PC-3 (cell line): ENCODE measurements at regions of chr1 and their contacts with region 1.

Region 1: DNA sequence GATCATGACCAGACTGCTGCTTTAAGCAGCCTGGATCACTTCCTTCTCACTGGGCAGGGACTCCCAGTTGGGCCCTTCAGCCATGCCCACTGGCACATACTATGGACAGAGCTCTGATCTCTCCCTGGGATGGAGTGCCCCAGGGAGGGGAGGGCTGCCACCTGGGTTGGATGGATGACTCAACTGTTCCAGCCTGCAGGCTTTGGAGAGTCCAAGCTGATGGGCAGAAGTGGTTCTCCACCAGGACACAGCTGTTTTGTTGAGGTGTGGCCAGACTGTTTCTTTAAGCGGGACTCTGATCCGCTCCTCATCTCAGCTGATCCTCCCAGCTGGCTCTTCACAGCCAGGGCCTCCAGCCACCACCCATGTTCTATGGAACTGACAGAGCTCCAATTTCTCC is 166.9 kb downstream of the MAGI3 start:
- DNase-seq: no peak
- ATAC-seq: no peak
- H3K4me3 ChIP-seq: no peak overlapping the region
- H3K27ac ChIP-seq: no peak overlapping the region
- H3K4me1 ChIP-seq: peaks cover 7% of the 10 kb centered on the region
- H3K27me3 ChIP-seq: no peaks in the 10 kb centered on the region
- CTCF ChIP-seq: no peak

Region 2: DNA sequence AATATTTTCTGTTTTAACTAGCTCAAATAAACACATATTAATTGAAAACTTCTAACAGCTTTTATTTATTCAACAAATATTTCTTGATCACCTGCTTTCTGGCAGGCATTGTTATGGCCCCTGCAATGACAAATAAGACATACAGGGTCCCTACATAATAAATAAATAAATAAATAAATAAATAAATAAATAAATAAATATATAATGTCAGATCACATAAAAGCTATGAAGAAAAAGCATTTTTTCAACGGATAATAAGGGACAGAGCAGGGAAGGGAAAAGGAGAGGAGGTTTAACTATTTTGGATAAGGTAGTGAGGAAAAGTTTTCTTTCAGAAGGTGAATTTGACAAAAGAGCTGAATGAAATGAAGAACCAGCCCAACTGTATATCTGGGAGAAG is 51.8 kb before region 1 on chr1:
- CTCF ChIA-PET with region 1: no interaction called
- POLR2A ChIA-PET with region 1: no interaction called
- intact Hi-C with region 1: no loop called
- DNase-seq: no peak
- ATAC-seq: no peak
- H3K4me3 ChIP-seq: no peak overlapping the region
- H3K27ac ChIP-seq: no peak overlapping the region
- H3K4me1 ChIP-seq: no peaks in the 10 kb centered on the region
- H3K27me3 ChIP-seq: no peaks in the 10 kb centered on the region
- CTCF ChIP-seq: no peak

Region 3: GRCh38 chr1:113515466-113515865 is 41.7 kb before region 1 on chr1:
- CTCF ChIA-PET with region 1: no interaction called
- POLR2A ChIA-PET with region 1: no interaction called
- intact Hi-C with region 1: loop called (anchors 1 kb)
- DNase-seq: peak; percentile 80
- ATAC-seq: peak; percentile 69
- H3K4me3 ChIP-seq: 0 out of 2 replicates have a peak overlapping the region, but pooled peaks have one; percentile 17
- H3K27ac ChIP-seq: 0 out of 2 replicates have a peak overlapping the region, but pooled peaks have one; percentile 5
- H3K4me1 ChIP-seq: peaks cover 26% of the 10 kb centered on the region
- H3K27me3 ChIP-seq: no peaks in the 10 kb centered on the region
- CTCF ChIP-seq: no peak

Region 4: DNA sequence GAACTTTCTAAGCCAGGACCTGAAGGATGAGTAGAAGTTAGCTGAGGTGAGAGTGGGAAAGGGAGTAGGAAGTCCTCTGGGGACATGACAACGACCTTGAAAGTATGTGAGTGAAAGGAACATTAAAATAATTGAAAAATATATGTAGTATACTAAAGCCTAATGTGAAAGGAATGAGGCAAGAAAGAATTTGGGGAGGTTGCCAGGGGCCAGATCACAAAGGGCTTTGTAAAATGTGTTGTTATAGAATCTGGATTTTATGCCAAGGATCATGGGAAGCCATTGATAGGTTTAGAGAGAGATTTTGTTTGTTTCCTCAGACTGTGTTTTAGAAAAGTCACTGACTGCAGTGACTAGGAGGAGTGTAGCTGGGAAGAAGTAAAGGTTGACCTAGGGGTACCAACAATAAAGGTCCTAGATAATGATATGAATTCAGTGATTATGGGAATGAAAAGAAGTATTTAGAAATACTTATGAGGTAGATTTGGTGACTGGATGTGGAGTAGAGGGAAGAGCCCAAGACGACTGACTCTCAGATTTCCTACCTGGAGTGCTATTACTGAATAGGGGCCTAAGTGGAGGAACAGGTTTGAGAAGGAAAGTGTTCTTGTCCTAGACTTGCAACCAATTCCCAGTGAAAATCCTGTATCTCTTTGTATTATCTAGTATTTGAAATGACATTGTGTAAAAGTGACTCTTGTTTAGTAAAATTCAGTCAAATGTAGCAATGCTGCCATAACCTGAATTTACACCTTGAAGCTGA is 22.3 kb after region 1 on chr1:
- CTCF ChIA-PET with region 1: no interaction called
- POLR2A ChIA-PET with region 1: no interaction called
- intact Hi-C with region 1: no loop called
- DNase-seq: peak; percentile 19
- ATAC-seq: no peak
- H3K4me3 ChIP-seq: no peak overlapping the region
- H3K27ac ChIP-seq: no peak overlapping the region
- H3K4me1 ChIP-seq: no peaks in the 10 kb centered on the region
- H3K27me3 ChIP-seq: no peaks in the 10 kb centered on the region
- CTCF ChIP-seq: no peak

Region 5: DNA sequence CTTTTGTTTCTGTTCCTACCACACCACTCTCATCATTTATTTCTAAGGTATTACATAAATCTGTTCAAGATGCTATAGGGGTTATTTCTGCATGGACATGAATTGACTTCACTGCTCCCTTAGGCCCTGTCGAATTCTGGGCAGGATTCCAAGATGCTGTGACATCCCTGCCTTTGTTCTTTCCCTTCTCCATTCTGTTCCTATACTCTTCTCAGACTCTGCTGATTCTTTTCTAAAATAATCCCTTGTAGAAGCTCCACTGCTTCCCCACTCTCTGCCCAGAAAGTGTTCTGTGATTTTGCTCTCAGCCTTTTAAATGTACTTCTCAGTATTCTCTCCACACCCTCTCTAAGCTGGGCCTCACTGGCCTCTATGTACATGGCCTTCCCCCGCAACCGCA is 102.9 kb after region 1 on chr1:
- CTCF ChIA-PET with region 1: no interaction called
- POLR2A ChIA-PET with region 1: no interaction called
- intact Hi-C with region 1: loop called (anchors 5 kb)
- DNase-seq: no peak
- ATAC-seq: no peak
- H3K4me3 ChIP-seq: no peak overlapping the region
- H3K27ac ChIP-seq: no peak overlapping the region
- H3K4me1 ChIP-seq: peaks cover 42% of the 10 kb centered on the region
- H3K27me3 ChIP-seq: no peaks in the 10 kb centered on the region
- CTCF ChIP-seq: no peak

Region 6: GRCh38 chr1:114564141-114564540 is 1007.0 kb after region 1 on chr1:
- CTCF ChIA-PET with region 1: no interaction called
- POLR2A ChIA-PET with region 1: no interaction called
- intact Hi-C with region 1: no loop called
- DNase-seq: no peak
- ATAC-seq: no peak
- H3K4me3 ChIP-seq: no peak overlapping the region
- H3K27ac ChIP-seq: no peak overlapping the region
- H3K4me1 ChIP-seq: no peaks in the 10 kb centered on the region
- H3K27me3 ChIP-seq: no peaks in the 10 kb centered on the region
- CTCF ChIP-seq: no peak